GM10248 (cell line): ENCODE measurements at regions of chr2 and their contacts with region 1.

Region 1: GRCh38 chr2:17830053-17831034 is 14.1 kb downstream of the MSGN1 start:
- DNase-seq: peak; percentile 75
- CTCF ChIP-seq: peak; percentile 83

Region 2: GRCh38 chr2:17813742-17814473 is 16.4 kb before region 1 on chr2:
- CTCF ChIA-PET with region 1: interaction called, 113 read pairs
- POLR2A ChIA-PET with region 1: no interaction called
- DNase-seq: peak; percentile 69
- CTCF ChIP-seq: no peak

Region 3: DNA sequence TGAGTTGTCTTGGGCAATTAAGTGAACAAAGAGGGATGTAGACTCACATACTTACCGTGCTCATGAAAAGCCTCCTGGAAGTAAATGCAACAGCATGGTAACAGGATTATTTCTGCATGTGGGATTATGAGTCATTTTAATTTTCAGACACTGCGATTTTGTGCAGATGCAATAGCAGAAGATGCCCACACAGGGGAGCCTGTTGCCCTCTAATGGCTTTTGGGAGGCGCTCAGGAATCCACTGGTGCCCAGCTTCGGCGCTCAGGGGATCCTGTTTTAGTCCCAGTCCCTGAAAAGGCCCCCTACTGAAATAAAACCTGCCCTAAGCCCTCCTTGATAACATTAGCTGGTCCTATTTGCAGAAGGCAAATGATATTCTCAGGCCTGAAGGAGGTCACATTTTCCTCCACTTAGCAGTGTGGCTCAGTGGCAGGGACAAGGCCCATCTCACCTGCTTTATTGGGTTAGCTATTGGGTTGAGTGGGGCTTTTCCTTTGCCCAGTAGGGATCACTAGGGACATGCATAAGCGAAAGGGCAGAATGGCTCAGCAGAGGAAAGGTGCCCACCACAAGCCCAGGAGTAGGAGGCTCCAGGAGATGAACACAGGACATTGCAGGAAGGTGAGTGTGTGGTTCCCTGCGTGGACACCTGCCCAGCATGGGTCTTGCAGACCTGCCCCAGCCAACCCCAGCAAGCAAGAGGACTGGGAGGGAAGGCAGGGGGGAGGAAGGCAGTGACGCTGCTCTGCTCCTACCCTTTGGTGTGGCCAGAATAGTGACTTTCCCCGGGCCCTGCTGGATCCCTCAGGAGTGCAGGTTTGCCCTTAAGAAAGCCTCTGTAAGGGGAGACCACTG is 21.6 kb after region 1 on chr2:
- CTCF ChIA-PET with region 1: interaction called, 37 read pairs
- POLR2A ChIA-PET with region 1: no interaction called
- DNase-seq: peak; percentile 74
- CTCF ChIP-seq: peak; percentile 87